Testis (tissue), 5 donors: ENCODE measurements at regions of chr10 and their contacts with region 1.

Region 1: DNA sequence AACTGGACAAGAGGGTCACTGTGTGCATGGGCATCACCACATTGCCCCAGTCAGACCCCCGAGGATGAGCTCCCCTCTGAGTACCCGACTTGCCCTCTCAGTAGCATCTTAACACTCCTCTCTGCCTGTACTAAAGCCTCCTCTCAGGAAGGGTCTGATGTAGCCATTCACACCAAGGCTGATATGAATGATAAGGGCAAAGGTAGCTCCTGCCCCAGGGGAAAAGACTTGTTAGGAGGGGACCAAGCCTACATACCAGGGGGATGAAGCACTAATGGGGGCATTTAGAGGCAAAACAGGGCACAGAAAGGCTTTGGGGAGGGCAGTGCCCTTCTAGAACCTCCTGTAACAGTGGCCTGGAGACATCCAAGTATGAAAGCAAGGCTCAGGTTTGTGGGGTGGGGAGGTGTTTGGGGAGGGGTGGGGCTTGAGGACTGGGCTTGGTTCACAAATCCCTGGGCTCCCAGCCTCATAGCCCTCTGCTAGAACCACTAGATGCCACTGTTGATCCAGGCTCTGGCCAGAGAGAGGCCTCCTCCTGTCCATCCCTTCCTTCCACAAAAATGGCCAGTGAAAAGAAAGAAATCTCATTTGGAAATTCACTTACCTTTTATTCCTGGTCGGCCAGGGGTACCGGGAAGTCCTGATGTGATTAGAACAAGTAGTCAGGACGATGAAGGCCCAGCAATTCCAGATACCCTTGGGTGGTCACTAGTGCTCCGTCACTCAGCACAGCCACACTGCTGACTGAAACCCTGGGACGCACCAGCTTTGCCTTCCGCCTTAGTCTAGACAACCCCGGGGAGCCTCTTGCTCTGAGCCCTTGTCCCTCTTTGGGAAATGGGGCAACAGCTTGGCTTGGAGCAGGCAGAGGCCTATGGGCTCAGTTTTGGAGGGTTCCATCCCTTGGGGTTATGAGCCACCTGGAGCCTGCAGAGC is 40.3 kb downstream of the COL17A1 start:
- DNase-seq: peak; percentile 66
- H3K4me3 ChIP-seq: no peak overlapping the region
- H3K27ac ChIP-seq: no peak overlapping the region
- H3K4me1 ChIP-seq: no peaks in the 10 kb centered on the region
- H3K27me3 ChIP-seq: no peaks in the 10 kb centered on the region
- CTCF ChIP-seq: peak in 2 of 3 experiments; percentile 40 to 42
- POLR2A ChIP-seq: no peak

Region 2: DNA sequence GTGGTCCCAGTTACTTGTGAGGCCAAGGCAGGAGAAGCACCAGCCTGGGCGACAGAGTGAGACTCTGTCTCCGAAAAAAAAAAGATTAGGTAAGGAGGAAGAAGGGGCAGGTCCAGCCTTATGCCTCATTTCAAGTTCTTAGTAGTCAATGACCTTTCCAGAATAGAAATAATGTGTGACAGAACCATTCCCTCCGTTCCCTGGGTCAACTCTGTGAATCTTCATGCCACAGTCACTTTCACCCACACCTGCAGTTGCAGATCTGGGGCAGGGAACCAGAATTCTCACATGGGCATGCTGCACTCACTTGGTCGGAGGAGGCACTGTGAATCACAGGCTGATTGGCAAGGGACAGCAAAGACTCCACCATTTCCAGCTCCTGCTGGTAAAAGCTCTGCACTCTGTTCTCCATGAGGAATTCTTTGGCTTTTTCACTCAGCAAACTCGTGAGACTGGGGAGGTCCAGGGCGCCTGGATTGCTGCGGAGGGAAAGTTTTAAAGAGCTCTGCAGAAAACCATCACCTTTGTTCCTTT is 148.1 kb before region 1 on chr10:
- intact Hi-C with region 1: no loop called
- DNase-seq: peak; percentile 42
- H3K4me3 ChIP-seq: no peak overlapping the region
- H3K27ac ChIP-seq: peak overlapping the region; percentile 16 to 36
- H3K4me1 ChIP-seq: peaks cover 21% of the 10 kb centered on the region
- H3K27me3 ChIP-seq: no peaks in the 10 kb centered on the region
- CTCF ChIP-seq: no peak
- POLR2A ChIP-seq: no peak

Region 3: GRCh38 chr10:103958996-103959395 is 86.4 kb before region 1 on chr10:
- intact Hi-C with region 1: no loop called
- DNase-seq: no peak
- H3K4me3 ChIP-seq: no peak overlapping the region
- H3K27ac ChIP-seq: no peak overlapping the region
- H3K4me1 ChIP-seq: no peaks in the 10 kb centered on the region
- H3K27me3 ChIP-seq: no peaks in the 10 kb centered on the region
- CTCF ChIP-seq: no peak
- POLR2A ChIP-seq: no peak

Region 4: GRCh38 chr10:104209575-104210198 is 164.3 kb after region 1 on chr10:
- intact Hi-C with region 1: loop called (anchors 10 kb)
- DNase-seq: peak; percentile 58
- H3K4me3 ChIP-seq: no peak overlapping the region
- H3K27ac ChIP-seq: no peak overlapping the region
- H3K4me1 ChIP-seq: no peaks in the 10 kb centered on the region
- H3K27me3 ChIP-seq: no peaks in the 10 kb centered on the region
- CTCF ChIP-seq: peak in 2 of 3 experiments; percentile 51 to 54
- POLR2A ChIP-seq: no peak